ENCODE measurements at regions of chr9 and their contacts with region 1.

Region 1: DNA sequence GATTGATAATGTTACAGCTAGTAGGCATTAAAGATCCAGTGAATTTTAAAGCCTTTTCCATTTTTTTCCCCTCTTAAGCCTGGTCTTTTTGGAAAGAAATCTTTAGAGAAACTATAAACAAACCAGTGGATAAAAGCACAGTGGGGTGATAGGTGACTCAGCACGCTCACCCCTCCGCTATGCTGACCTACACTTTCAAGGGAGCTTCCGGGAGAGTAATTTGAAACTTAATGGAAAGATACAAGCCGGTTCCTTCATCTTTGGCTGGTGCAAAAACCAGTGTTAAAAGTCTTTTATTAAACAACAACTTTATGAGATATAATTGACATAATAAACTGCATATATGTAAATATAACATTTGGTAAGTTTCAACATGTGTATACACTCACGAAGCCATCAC is 27.0 kb upstream of the ALDOB start:
- DNase-seq: no peak
- H3K4me3 ChIP-seq: no peak overlapping the region
- H3K27ac ChIP-seq: no peak overlapping the region
- H3K4me1 ChIP-seq: no peaks in the 10 kb centered on the region
- H3K27me3 ChIP-seq: no peaks in the 10 kb centered on the region
- CTCF ChIP-seq: no peak

Region 2: DNA sequence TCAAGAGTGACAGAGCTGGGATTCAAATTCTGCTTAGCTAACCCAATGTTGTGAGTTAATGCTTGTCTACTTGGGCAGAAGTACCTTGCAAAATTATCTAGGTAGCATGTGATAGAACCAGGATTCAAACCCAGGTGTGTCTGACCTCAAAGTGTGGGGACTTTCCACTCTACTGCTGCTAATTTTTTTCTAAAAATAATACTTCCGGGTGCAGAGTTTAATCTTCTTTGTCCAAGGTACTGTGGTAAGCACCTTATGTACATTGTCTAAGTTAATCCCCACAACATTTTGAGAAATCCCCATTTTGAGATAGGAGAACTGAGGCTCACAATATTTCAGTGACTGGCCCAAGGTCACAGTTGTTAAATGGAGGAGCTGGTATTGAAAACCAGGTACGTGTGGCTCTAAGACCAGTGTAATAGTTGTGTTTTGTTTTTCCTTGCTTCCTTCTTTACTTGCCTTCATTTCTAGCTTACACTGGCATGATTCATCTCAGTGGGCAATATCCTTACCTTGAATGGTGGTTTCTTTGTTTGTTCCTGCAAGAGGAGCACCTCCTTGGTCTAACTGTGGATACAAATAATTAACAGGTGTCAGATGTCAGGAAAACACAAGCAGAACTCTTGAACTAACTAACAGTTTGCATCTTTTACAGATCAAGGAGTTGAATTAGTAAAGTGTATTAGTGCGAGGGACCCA is 34.5 kb before region 1 on chr9:
- intact Hi-C with region 1: no loop called
- DNase-seq: no peak
- H3K4me3 ChIP-seq: no peak overlapping the region
- H3K27ac ChIP-seq: peak overlapping the region; percentile 46
- H3K4me1 ChIP-seq: no peaks in the 10 kb centered on the region
- H3K27me3 ChIP-seq: no peaks in the 10 kb centered on the region
- CTCF ChIP-seq: no peak

Region 3: DNA sequence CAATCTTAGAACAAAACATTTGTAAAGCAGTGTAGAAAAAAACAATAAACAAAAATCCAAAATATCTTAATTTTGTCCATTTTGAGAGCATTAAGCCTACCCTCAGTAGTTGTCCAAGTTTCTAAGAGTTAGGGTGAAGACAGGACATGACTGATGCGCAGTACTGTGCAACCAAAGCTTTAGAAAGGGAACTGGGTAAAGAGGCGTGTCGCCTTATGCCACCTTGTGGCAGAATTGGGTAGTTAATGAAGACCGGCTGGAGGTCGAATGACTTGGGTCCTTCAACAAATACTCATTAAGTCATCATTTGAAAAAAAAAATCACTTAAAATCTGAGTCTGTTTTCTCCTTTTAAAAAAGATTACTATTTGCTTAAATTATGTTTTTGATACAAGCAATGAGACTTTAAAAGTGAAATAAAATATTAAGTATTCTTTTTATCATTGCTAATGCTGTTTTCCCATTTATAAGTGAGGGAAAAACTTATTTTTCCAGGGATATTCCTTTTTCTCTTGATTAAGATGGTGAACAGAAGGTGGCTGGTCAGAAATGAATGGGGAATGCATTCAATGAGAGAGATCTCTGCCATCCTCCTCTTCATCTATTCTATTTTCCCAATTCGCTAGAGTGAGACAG is 67.6 kb after region 1 on chr9:
- intact Hi-C with region 1: loop called (anchors 2 kb)
- DNase-seq: peak; percentile 73
- H3K4me3 ChIP-seq: no peak overlapping the region
- H3K27ac ChIP-seq: no peak overlapping the region
- H3K4me1 ChIP-seq: peaks cover 6% of the 10 kb centered on the region
- H3K27me3 ChIP-seq: no peaks in the 10 kb centered on the region
- CTCF ChIP-seq: peak; percentile 84